PC-3 (cell line): ENCODE measurements at regions of chr20 and their contacts with region 1.

Region 1: DNA sequence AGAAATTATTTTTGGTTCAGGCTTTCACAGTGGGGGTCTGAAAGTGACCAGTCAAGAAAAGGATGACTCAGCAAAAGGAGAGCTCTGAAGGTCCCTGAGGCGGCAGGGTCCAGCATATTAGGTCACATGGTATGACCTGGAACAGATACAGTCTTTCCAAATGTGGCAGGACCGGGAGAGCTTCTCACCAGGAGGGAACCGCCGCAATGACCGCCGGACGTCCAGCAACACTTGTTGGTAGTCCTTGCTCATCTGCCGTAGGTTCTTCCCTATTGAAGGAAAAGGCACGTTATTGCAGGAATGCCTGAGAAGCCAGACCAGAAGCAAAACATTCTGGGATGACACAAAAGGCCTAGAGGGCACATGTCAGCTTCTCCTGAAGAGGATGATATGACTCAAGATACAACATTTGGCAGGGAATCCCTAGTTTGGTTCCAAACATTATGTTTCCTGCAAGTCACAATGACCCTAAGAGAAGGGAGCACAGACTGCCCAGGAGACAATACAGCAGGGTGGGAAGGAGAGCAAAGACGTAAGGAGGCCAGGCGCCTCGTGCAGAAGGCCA is 17.4 kb downstream of the TBC1D20 start:
- DNase-seq: peak; percentile 40
- ATAC-seq: peak; percentile 37
- H3K4me3 ChIP-seq: no peak overlapping the region
- H3K27ac ChIP-seq: no peak overlapping the region
- H3K4me1 ChIP-seq: no peaks in the 10 kb centered on the region
- H3K27me3 ChIP-seq: no peaks in the 10 kb centered on the region
- CTCF ChIP-seq: no peak

Region 2: GRCh38 chr20:431012-431904 is 13.7 kb before region 1 on chr20:
- CTCF ChIA-PET with region 1: interaction called, 10 read pairs
- POLR2A ChIA-PET with region 1: no interaction called
- intact Hi-C with region 1: no loop called
- DNase-seq: peak; percentile 91
- ATAC-seq: peak; percentile 82
- H3K4me3 ChIP-seq: no peak overlapping the region
- H3K27ac ChIP-seq: no peak overlapping the region
- H3K4me1 ChIP-seq: no peaks in the 10 kb centered on the region
- H3K27me3 ChIP-seq: no peaks in the 10 kb centered on the region
- CTCF ChIP-seq: peak; percentile 99

Region 3: DNA sequence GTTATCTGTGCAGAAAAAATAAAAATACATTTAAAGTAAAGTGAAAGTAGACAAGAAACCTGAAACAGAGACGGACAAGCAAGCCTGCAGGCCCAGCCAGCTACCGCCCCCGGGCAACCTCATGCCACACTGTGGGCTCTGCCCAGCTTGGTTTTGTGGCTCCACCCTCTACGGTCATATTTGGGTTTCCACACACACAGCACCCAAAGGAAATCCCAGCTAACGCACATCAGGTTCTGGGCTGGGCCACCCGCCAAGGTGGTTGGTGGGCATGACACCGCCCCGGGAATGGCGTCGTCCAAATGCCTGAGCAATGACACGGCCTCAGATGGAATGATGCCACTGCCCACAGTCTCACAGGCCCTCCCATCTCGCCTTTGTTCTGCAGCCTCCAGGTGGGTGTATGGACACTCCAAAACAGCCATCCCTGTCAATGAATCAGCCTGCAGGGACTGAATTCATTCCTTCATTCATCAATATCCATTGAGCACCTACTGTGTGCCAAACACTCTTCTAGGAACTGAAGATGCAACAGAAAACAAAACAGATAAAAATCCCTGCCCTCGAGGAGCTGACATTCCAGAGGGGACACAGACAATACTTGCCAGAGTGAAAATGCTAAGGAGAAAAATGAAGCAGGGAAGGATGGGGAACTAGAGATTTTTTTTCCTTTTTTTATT is 411.6 kb after region 1 on chr20:
- CTCF ChIA-PET with region 1: no interaction called
- POLR2A ChIA-PET with region 1: no interaction called
- intact Hi-C with region 1: no loop called
- DNase-seq: peak; percentile 99
- ATAC-seq: peak; percentile 96
- H3K4me3 ChIP-seq: peak overlapping the region; percentile 51
- H3K27ac ChIP-seq: peak overlapping the region; percentile 68
- H3K4me1 ChIP-seq: peaks cover 38% of the 10 kb centered on the region
- H3K27me3 ChIP-seq: no peaks in the 10 kb centered on the region
- CTCF ChIP-seq: no peak